Left cardiac atrium (tissue), 4 donors: ENCODE measurements at regions of chr9 and their contacts with region 1.

Region 1: GRCh38 chr9:19116107-19116790 is 11.0 kb downstream of the PLIN2 start:
- DNase-seq: peak; percentile 66
- ATAC-seq: peak; percentile 56 to 75

Region 2: GRCh38 chr9:19074836-19075235 is 41.4 kb before region 1 on chr9:
- intact Hi-C with region 1: no loop called
- DNase-seq: no peak
- ATAC-seq: no peak

Region 3: DNA sequence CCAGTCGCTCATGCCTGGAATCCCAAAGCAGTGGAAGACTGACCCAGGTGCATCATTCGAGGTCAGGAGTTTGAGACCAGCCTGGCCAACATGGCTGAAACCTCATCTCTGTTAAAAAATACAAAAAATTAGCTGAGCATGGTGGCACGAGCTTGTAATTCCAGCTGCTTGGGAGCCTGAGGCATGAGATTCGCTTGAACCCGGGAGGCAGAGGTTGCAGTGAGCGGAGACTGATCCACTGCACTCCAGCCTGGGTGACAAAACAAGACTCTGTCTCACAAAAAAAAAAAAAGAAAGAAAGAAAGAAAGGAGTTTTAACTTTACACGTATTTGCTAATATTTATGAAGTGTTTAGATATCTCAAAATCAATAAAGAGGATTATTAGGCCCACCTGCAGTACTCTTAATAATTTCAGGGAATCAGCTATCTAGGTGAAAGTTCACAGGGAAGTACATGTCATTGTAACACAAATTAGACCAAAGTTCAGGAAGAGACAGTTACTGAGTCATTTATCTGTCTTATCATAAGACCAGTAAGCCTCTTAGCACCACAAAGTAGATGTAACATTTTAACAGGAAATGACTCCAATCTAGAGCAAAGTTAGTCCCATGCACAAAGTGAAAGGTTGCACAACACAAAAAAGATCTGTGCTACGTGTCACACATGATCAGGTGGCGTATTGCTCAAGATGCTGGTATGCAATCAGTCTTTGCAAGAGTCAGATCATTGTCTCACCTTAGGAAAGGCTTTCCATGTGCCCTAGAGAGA is 45.2 kb after region 1 on chr9:
- intact Hi-C with region 1: loop called in 1 of 2 experiments (anchors 2 kb)
- DNase-seq: no peak
- ATAC-seq: peak; percentile 87 to 91